A673 (cell line): ENCODE measurements at regions of chr19 and their contacts with region 1.

Region 1: DNA sequence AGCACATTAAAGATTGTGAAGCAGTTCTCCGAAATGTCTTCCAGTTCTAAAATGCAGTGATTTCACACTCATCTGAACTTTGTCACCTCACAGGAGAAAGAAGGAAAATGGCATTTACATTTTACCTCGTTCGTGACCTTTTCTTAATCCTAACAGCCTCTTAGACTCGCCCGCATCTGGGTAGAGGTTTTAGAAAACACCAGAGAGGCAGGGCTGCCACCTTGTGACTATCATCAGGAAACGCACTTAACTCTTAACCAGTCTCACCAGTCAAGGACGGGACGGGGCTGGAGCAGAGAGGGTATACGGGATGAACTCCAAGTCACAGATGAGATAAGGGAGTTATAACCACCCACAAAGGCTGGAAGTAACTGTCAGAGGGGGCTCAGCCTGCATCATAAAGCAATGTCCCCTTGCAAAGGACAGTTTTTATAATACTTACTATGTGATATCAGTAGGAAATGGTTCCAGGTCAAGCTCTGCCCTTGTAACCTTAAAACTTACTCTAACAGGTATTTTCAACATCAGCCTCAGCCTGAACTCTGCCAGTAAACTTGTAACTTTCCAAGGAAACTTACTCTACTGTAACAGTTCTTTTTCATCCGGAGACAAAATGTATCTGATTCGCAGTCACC is 8.6 kb upstream of the CEACAM6 start:
- DNase-seq: peak; percentile 94
- H3K4me3 ChIP-seq: no peak overlapping the region
- H3K27ac ChIP-seq: peak overlapping the region; percentile 96
- H3K4me1 ChIP-seq: peaks cover 62% of the 10 kb centered on the region
- H3K27me3 ChIP-seq: no peaks in the 10 kb centered on the region
- CTCF ChIP-seq: peak; percentile 87

Region 2: GRCh38 chr19:41297628-41298347 is 448.9 kb before region 1 on chr19:
- CTCF ChIA-PET with region 1: no interaction called
- POLR2A ChIA-PET with region 1: interaction called, 28 read pairs
- intact Hi-C with region 1: no loop called
- DNase-seq: no peak
- H3K4me3 ChIP-seq: no peak overlapping the region
- H3K27ac ChIP-seq: no peak overlapping the region
- H3K4me1 ChIP-seq: no peaks in the 10 kb centered on the region
- H3K27me3 ChIP-seq: no peaks in the 10 kb centered on the region
- CTCF ChIP-seq: no peak

Region 3: DNA sequence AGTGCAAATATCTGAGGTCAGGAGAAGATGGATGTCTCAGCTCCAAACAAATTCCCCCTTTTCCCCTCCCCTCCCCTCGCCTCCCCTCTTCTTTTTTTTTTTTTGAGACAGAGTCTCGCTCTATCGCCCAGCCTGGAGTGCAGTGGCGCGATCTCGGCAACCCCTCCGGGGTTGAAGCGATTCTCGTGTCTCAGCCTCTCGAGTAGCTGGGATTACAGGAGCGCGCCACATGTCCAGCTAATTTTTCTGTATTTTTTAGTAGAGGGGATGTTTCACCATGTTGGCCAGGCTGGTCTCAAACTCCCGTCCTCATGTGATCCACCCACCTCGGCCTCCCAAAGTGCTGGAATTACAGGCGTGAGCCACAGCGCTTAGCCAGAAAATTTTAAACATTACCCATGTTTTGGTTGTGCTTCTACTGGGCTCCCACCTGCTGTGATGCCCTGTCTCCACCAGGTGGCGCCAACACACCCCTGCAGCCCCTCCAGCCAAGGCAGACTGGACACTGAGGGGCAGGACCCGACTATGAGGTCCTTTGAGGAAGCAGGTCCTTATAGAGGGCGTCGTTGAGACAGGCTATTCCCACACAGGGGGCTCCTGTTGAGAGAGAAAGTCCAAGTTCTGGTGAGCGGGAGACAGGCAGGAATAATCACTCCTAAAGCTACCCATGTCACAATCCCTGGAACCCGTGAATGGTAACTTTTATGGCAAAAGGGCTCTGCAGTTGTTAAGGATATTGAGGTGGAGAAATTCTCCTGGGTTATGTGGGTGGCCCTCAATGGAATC is 297.4 kb before region 1 on chr19:
- CTCF ChIA-PET with region 1: no interaction called
- POLR2A ChIA-PET with region 1: no interaction called
- intact Hi-C with region 1: loop called (anchors 5 kb)
- DNase-seq: peak; percentile 75
- H3K4me3 ChIP-seq: peak overlapping the region; percentile 42
- H3K27ac ChIP-seq: no peak overlapping the region
- H3K4me1 ChIP-seq: peaks cover 6% of the 10 kb centered on the region
- H3K27me3 ChIP-seq: no peaks in the 10 kb centered on the region
- CTCF ChIP-seq: peak; percentile 98

Region 4: GRCh38 chr19:41641879-41642485 is 104.7 kb before region 1 on chr19:
- CTCF ChIA-PET with region 1: interaction called, 14 read pairs
- POLR2A ChIA-PET with region 1: no interaction called
- intact Hi-C with region 1: loop called (anchors 5 kb)
- DNase-seq: peak; percentile 84
- H3K4me3 ChIP-seq: no peak overlapping the region
- H3K27ac ChIP-seq: no peak overlapping the region
- H3K4me1 ChIP-seq: no peaks in the 10 kb centered on the region
- H3K27me3 ChIP-seq: no peaks in the 10 kb centered on the region
- CTCF ChIP-seq: peak; percentile 95

Region 5: DNA sequence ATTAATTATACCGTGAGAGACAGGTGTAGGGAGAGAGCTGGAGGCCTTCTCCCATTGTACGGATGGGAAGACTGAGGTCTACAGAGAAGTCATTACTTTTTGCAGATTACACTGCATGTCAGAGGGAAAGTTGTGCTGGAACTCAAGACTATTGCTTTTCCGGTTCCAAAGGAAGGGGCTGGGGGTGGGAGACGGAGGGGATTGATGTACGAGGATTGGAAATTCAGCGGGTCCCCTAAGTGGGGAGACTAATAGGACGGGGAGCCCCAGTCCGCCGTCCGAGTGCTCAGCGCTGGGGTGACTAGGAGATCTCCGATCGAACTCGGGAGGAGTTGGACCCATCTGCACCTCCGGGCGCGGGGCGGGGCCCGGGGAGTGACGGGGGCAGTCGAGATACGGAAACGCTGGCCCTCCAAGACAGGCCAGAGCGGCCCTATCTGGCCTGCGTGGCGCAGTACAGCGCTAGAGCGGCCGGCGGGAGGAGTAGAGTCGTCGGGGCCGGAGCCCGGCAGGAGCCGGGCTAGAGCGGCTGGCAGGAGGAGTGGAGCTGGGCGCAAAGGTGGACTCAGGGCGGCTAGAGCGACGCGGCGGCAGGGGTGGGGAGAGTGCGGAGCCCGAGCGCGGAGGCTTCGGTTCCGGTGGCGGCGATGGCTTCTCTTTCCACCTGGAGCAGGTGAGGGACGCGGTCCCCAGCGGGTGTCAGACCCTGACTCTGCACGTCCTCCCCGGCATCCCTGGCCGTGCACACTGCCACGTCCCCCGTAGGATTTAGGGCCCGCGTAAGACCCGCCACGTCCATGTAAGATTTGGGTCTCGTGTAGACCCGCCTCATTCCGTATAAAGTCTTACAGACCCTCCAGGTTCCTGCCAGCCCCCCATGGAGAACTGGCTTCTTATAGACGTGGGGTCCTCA is 137.4 kb after region 1 on chr19:
- CTCF ChIA-PET with region 1: no interaction called
- POLR2A ChIA-PET with region 1: no interaction called
- intact Hi-C with region 1: loop called (anchors 2 kb)
- DNase-seq: peak; percentile 99
- H3K4me3 ChIP-seq: peak overlapping the region; percentile 84
- H3K27ac ChIP-seq: peak overlapping the region; percentile 91
- H3K4me1 ChIP-seq: peaks cover 65% of the 10 kb centered on the region
- H3K27me3 ChIP-seq: no peaks in the 10 kb centered on the region
- CTCF ChIP-seq: no peak

Region 6: DNA sequence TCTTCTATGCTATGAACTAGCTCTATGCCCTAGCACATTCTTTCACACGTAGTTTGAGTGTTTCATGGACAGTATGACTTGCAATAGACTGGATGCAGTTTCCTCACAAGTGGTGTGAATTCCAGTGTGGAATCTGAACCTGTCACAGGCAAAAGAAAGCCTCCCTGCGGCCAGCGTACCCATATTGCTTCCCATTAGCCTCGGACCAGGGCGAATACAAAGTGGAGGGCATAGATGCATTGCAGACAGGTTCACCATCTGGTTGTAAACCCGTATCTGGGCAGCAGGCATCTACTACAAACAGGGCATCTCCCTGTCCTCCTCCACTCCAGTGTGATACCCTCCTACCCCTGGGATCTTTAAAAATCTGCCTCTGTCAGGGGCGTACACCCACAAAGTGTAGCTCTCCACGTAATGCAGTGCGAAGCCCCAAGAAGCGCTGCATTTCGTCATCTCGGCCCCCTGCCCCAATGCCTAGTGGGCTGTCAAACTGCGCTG is 521.0 kb after region 1 on chr19:
- CTCF ChIA-PET with region 1: no interaction called
- POLR2A ChIA-PET with region 1: no interaction called
- intact Hi-C with region 1: no loop called
- DNase-seq: no peak
- H3K4me3 ChIP-seq: peak overlapping the region; percentile 62
- H3K27ac ChIP-seq: peak overlapping the region; percentile 99
- H3K4me1 ChIP-seq: peaks cover 18% of the 10 kb centered on the region
- H3K27me3 ChIP-seq: no peaks in the 10 kb centered on the region
- CTCF ChIP-seq: no peak